ENCODE measurements at regions of chr16 and their contacts with region 1.

Region 1: GRCh38 chr16:66344533-66345145 is 21.9 kb upstream of the CDH5 start:
- DNase-seq: peak in 3 of 10 donors; percentile 9 to 61 (median 46)

Region 2: GRCh38 chr16:66258916-66259845 is 85.5 kb before region 1 on chr16:
- intact Hi-C with region 1: no loop called
- DNase-seq: peak in 1 of 10 donors; percentile 38

Region 3: DNA sequence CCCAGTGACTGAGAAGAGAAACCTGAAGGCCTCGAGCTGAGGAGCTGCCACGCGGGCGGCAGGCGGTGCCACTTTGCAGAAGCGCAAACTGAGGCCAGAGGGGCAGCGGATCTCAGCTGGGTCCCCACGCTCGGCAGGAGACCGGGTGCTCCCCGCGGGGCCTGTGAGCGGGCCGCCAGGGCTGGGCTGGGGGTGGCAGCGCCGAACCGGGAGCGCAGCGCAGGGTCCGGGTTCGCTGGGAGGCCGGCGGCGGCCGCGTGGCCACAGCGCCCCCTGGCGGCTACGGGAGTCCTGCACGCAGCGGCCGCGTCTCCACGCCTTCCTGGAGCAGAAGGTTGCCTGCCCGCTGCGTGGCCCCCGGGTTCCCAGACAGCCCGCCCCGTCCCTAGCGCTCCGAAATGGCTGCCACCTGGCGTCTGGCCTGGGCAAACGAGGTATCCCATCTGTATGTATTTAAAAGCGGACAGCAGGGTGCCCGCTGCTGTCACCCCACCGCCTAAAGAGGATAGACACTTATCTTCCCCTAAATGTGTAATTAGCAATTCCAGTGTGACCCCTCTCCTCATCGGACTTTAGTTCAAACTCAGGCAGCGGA is 74.2 kb before region 1 on chr16:
- intact Hi-C with region 1: loop called (anchors 10 kb)
- DNase-seq: peak; percentile 55 to 96 (median 72)

Region 4: DNA sequence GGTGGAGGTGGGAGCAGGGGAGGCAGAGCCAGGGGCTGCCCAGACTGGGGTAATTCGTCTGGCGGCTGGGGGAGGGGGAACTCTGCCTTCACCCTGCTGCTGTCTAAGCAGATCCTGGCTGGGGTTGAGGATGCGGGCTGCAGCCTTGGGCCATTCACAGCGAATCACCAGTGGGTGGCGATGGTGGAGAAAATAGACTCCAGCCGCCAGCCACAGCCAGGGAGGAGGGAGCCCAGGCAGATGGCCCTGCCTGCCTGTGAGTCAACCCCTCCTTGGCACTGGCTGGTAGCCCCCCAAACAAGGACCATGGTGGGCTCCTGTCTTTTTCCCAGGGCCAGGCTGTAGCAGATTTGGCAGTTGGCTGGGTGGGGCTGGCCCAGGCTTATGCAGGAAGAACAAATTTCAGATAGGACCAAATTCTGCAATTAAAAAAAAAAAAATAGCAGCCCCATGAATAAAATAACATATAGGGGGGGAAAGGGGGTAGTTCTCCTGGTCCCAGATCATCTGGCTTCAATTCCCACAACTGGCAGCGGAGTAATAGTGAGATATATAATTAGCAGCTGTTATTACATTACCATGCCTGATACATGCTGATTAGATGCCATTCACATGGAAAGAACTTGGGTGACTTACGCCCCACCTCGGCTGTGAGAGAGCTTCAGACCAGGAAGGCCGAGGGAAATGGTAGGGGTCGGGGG is 19.7 kb before region 1 on chr16:
- intact Hi-C with region 1: loop called (anchors 2 kb)
- DNase-seq: peak; percentile 45 to 95 (median 66)

Region 5: GRCh38 chr16:66649636-66650205 is 305.1 kb after region 1 on chr16:
- intact Hi-C with region 1: no loop called
- DNase-seq: no peak